PC-3 (cell line): ENCODE measurements at regions of chr11 and their contacts with region 1.

Region 1: DNA sequence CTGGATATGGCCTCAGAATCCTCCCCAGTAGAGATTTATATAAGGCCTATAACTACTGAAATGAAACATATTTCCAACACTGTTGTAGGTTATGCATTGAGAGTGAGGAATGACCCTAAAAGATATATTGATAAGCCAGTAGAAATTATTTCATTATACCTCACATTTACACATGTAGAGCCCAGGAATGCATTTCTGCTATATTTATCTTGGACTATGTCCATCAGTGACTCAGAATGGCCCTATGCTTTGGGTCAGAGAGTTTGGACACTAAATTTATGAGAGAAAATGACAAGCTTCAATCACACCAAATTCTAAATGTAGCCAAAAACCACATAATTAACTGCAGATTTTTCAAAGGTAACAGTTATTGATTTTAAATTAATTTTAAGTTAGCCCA is 761.9 kb downstream of the DLG2 start:
- DNase-seq: peak; percentile 91
- ATAC-seq: peak; percentile 25
- H3K4me3 ChIP-seq: no peak overlapping the region
- H3K27ac ChIP-seq: 0 out of 2 replicates have a peak overlapping the region, but pooled peaks have one; percentile 80
- H3K4me1 ChIP-seq: peaks cover 53% of the 10 kb centered on the region
- H3K27me3 ChIP-seq: no peaks in the 10 kb centered on the region
- CTCF ChIP-seq: no peak

Region 2: GRCh38 chr11:84800755-84801346 is 64.4 kb before region 1 on chr11:
- CTCF ChIA-PET with region 1: no interaction called
- POLR2A ChIA-PET with region 1: no interaction called
- intact Hi-C with region 1: loop called (anchors 1 kb)
- DNase-seq: peak; percentile 83
- ATAC-seq: peak; percentile 62
- H3K4me3 ChIP-seq: no peak overlapping the region
- H3K27ac ChIP-seq: no peak overlapping the region
- H3K4me1 ChIP-seq: peaks cover 12% of the 10 kb centered on the region
- H3K27me3 ChIP-seq: 0 out of 2 replicates have a peak, but pooled peaks cover 6% of the 10 kb centered on the region
- CTCF ChIP-seq: peak; percentile 88

Region 3: DNA sequence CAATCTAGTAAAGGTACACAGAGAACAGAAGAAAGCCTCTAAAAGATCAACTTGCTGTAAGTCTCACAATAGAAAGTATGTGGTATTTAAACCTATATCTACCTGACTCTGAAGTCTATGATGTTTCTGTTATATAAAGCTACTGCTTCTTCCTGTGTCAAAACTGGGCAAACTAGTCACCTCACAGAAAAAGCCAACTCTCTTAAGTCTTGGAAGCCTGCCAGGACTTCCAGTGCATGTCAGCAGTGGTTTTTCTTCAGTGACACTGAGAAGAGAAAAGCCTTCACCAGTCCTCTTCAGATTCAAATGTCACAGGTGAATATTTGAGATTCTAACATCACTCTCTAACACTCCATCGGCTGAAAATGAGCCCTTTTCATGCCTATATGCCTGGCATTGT is 46.1 kb before region 1 on chr11:
- CTCF ChIA-PET with region 1: no interaction called
- POLR2A ChIA-PET with region 1: no interaction called
- intact Hi-C with region 1: loop called (anchors 2 kb)
- DNase-seq: peak; percentile 87
- ATAC-seq: peak; percentile 44
- H3K4me3 ChIP-seq: no peak overlapping the region
- H3K27ac ChIP-seq: no peak overlapping the region
- H3K4me1 ChIP-seq: peaks cover 22% of the 10 kb centered on the region
- H3K27me3 ChIP-seq: no peaks in the 10 kb centered on the region
- CTCF ChIP-seq: no peak

Region 4: DNA sequence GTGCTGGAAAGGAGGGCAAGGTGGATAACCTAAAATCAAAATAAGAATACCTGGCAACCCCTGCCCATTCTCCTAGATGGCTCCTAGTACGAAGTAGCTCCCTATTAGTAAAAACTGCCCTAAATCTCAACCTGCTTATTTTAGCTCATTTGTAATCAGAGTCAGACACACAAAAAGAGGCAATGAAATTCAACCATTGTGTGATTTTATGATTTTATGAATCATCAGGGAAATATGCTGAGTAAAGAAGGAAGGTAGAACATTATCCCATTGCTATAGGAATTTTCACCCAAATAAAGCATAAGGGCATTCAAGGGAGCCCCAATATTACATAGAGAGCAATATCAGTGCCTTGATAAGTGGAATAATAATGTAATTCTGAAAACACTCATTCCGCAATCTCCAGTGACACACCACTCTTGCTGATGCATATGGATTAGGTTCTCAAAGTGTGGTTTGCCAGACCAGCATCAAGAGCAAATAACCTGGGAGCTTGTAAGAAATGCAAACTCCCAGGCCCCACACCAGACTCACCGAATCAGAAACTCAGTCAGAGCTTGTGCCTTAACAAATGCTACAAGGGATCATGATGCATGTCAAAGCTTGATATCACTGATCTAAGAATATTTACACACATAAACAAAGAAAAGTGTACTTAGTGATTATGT is 27.7 kb before region 1 on chr11:
- CTCF ChIA-PET with region 1: no interaction called
- POLR2A ChIA-PET with region 1: no interaction called
- intact Hi-C with region 1: loop called (anchors 2 kb)
- DNase-seq: peak; percentile 79
- ATAC-seq: peak; percentile 94
- H3K4me3 ChIP-seq: no peak overlapping the region
- H3K27ac ChIP-seq: no peak overlapping the region
- H3K4me1 ChIP-seq: peaks cover 12% of the 10 kb centered on the region
- H3K27me3 ChIP-seq: no peaks in the 10 kb centered on the region
- CTCF ChIP-seq: no peak

Region 5: DNA sequence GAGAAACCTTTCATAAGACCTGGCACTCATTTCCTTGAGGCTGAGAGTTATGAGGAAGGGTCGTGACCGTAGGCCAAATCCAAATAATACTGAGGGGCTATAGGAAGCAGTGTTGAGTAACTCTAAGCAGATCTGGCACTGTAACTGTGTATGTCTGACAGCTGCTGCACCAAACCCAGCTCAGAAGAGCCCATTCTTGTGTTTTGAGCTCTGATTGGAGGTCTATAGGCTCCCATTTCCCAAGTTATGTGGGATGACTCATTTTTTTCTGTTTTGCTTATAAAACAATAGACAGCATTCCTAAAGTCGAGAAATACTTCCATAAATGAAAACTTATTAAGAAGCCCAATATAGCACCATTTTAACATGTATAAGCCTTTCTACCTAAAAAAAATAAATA is 116.1 kb after region 1 on chr11:
- CTCF ChIA-PET with region 1: no interaction called
- POLR2A ChIA-PET with region 1: no interaction called
- intact Hi-C with region 1: loop called (anchors 2 kb)
- DNase-seq: peak; percentile 22
- ATAC-seq: peak; percentile 29; the same call in 1 of the 2 replicates
- H3K4me3 ChIP-seq: no peak overlapping the region
- H3K27ac ChIP-seq: no peak overlapping the region
- H3K4me1 ChIP-seq: no peaks in the 10 kb centered on the region
- H3K27me3 ChIP-seq: 0 out of 2 replicates have a peak, but pooled peaks cover 3% of the 10 kb centered on the region
- CTCF ChIP-seq: no peak